ENCODE measurements at regions of chr17 and their contacts with region 1.

Region 1: DNA sequence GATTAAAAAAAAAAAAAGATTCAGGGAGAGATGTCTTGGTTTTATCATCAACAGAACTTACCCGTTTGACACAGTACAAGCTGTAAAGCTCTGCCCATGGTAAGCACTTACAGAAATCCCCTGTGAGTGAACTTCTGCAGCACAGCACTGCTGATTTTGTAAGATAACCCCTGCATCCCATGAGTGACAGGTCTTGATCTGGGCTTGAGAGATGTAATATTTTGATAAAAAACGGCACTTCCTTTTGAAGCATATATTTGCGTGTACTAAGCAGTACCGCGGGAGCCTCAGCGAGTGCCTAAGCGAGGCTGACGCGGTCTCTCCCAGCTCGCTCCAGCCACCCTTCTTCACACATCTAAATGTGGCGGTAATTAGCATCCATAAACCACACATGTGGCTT is 50.5 kb downstream of the IKZF3 start:
- DNase-seq: peak; percentile 64
- H3K4me3 Mint-ChIP-seq: no peak overlapping the region
- H3K27ac Mint-ChIP-seq: no peak overlapping the region
- H3K4me1 Mint-ChIP-seq: peaks cover 19% of the 10 kb centered on the region
- H3K27me3 Mint-ChIP-seq: no peaks in the 10 kb centered on the region
- CTCF ChIP-seq: no peak

Region 2: GRCh38 chr17:39591958-39592954 is 221.4 kb before region 1 on chr17:
- CTCF ChIA-PET with region 1: no interaction called
- intact Hi-C with region 1: no loop called
- DNase-seq: peak; percentile 94
- H3K4me3 Mint-ChIP-seq: no peak overlapping the region
- H3K27ac Mint-ChIP-seq: no peak overlapping the region
- H3K4me1 Mint-ChIP-seq: no peaks in the 10 kb centered on the region
- H3K27me3 Mint-ChIP-seq: peaks cover 100% of the 10 kb centered on the region
- CTCF ChIP-seq: peak; percentile 15

Region 3: GRCh38 chr17:39636927-39637736 is 176.5 kb before region 1 on chr17 and contains the start of gene STARD3:
- CTCF ChIA-PET with region 1: interaction called, 73 read pairs
- intact Hi-C with region 1: no loop called
- DNase-seq: no peak
- H3K4me3 Mint-ChIP-seq: peak within 1 kb of the TSS; percentile 71
- H3K27ac Mint-ChIP-seq: peak within 1 kb of the TSS; percentile 28
- H3K4me1 Mint-ChIP-seq: peaks cover 61% of the 10 kb centered on the region
- H3K27me3 Mint-ChIP-seq: peaks cover 5% of the 10 kb centered on the region
- CTCF ChIP-seq: no peak
- total RNA-seq, gene STARD3: 2,579 and 2,697 TPM in 2 replicates

Region 4: DNA sequence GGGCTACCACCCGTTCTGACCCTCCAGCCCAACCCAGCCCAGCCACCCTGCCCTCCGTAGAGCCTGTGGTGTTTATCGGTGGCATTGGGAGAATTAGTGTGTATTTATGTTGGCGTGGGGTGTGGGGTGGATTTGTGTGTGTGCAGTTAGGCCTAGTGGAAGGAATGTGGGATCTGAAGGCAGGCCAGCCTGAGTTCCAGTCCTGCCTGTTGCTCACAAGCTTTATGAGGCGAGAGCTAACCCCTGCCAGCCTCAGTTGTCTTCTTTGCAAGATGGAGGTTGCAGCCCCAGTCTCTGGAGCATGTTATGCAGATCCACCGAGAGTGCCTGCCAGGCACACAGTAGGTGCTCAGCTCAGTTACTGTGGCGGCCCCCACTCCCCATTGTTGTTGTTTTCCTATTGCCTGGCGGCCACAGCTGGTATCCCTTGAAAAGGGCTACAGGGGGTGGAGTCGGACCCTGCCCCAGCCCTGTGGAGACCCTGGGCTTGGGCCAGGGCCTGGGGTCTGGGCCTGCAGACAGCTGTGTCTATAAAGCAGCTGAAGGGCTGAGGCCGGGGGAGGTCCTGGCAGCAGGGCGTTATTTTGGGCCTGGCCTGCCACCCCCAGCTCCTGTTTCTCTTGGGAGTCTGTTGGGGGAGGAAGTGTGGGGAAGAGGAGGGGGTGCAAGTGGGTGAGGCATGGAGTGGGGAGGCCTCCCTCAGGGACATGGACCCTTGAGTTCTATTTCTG is 108.6 kb before region 1 on chr17:
- CTCF ChIA-PET with region 1: interaction called, 99 read pairs
- intact Hi-C with region 1: no loop called
- DNase-seq: peak; percentile 99
- H3K4me3 Mint-ChIP-seq: peak overlapping the region; percentile 71
- H3K27ac Mint-ChIP-seq: peak overlapping the region; percentile 67
- H3K4me1 Mint-ChIP-seq: peaks cover 92% of the 10 kb centered on the region
- H3K27me3 Mint-ChIP-seq: no peaks in the 10 kb centered on the region
- CTCF ChIP-seq: no peak

Region 5: GRCh38 chr17:39763046-39763820 is 50.4 kb before region 1 on chr17:
- CTCF ChIA-PET with region 1: interaction called, 1,211 read pairs
- intact Hi-C with region 1: no loop called
- DNase-seq: no peak
- H3K4me3 Mint-ChIP-seq: no peak overlapping the region
- H3K27ac Mint-ChIP-seq: no peak overlapping the region
- H3K4me1 Mint-ChIP-seq: peaks cover 12% of the 10 kb centered on the region
- H3K27me3 Mint-ChIP-seq: peaks cover 26% of the 10 kb centered on the region
- CTCF ChIP-seq: no peak

Region 6: DNA sequence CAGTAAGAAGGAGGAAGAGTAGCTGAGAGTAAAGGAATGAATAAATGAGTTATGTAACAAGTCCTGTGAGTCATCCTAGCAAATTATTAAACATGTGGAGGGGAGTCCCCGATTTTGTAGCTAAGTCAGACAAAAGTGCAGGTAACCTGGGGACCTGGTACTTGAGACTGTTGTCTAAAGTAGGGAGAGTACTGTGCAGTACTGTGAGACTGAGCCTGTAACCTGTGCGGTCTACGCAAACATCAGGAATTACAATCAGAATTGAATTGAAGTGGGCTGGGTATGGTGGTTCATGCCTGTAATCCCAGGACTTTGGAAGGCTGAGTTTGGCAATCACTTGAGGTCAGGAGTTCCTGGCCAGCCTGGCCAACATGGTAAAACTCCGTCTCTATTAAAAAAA is 14.8 kb after region 1 on chr17:
- CTCF ChIA-PET with region 1: interaction called, 1,210 read pairs
- intact Hi-C with region 1: loop called (anchors 1 kb)
- DNase-seq: peak; percentile 100
- H3K4me3 Mint-ChIP-seq: peak overlapping the region; percentile 36
- H3K27ac Mint-ChIP-seq: peak overlapping the region; percentile 48
- H3K4me1 Mint-ChIP-seq: peaks cover 17% of the 10 kb centered on the region
- H3K27me3 Mint-ChIP-seq: no peaks in the 10 kb centered on the region
- CTCF ChIP-seq: no peak

Region 7: GRCh38 chr17:39916918-39917317 is 103.3 kb after region 1 on chr17:
- CTCF ChIA-PET with region 1: interaction called, 1,004 read pairs
- intact Hi-C with region 1: no loop called
- DNase-seq: peak; percentile 94
- H3K4me3 Mint-ChIP-seq: no peak overlapping the region
- H3K27ac Mint-ChIP-seq: no peak overlapping the region
- H3K4me1 Mint-ChIP-seq: peaks cover 24% of the 10 kb centered on the region
- H3K27me3 Mint-ChIP-seq: no peaks in the 10 kb centered on the region
- CTCF ChIP-seq: no peak

Region 8: DNA sequence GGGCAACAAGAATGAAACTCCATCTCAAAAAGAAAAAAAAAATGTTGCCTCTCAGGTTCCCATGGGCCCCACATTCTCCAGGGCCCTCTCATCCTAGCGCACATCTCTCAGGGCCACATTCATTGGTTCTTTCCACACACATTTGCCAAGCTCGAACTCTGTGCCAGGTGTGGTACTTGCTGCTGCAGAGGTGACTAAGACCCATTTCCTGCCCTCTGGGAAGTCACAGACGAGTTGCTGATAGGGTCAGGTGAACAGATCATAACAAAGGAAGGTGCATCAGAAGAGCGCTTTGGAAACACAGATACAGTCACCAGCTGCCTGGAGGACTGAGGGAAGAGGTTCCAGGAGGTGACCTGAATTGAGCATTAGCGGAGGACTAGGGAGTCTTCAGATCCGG is 150.2 kb after region 1 on chr17:
- CTCF ChIA-PET with region 1: interaction called, 1,809 read pairs
- intact Hi-C with region 1: loop called (anchors 1 kb)
- DNase-seq: peak; percentile 94
- H3K4me3 Mint-ChIP-seq: no peak overlapping the region
- H3K27ac Mint-ChIP-seq: peak overlapping the region; percentile 0
- H3K4me1 Mint-ChIP-seq: peaks cover 45% of the 10 kb centered on the region
- H3K27me3 Mint-ChIP-seq: peaks cover 32% of the 10 kb centered on the region
- CTCF ChIP-seq: no peak

Measured in Calu3 (cell line).